WTC11 (cell line): ENCODE measurements at regions of chr5 and their contacts with region 1.

Region 1: GRCh38 chr5:69093771-69094482 is at the start of gene SLC30A5:
- DNase-seq: peak; percentile 99
- ATAC-seq: peak; percentile 99
- H3K4me3 Mint-ChIP-seq: peak within 1 kb of the TSS; percentile 94
- H3K27ac Mint-ChIP-seq: peak within 1 kb of the TSS; percentile 94
- H3K4me1 Mint-ChIP-seq: peaks cover 12% of the 10 kb centered on the region
- H3K27me3 Mint-ChIP-seq: no peaks in the 10 kb centered on the region; the same call in 1 of the 2 replicates
- CTCF ChIP-seq: peak; percentile 61
- total RNA-seq, gene SLC30A5: 32.2 to 37.4 TPM (median 34.1 TPM) in 3 replicates

Region 2: GRCh38 chr5:69013481-69013880 is 80.4 kb before region 1 on chr5:
- CTCF ChIA-PET with region 1: no interaction called
- POLR2A ChIA-PET with region 1: no interaction called
- DNase-seq: no peak
- ATAC-seq: no peak
- H3K4me3 Mint-ChIP-seq: no peak overlapping the region
- H3K27ac Mint-ChIP-seq: no peak overlapping the region
- H3K4me1 Mint-ChIP-seq: no peaks in the 10 kb centered on the region
- H3K27me3 Mint-ChIP-seq: no peaks in the 10 kb centered on the region; the same call in 1 of the 2 replicates
- CTCF ChIP-seq: no peak

Region 3: DNA sequence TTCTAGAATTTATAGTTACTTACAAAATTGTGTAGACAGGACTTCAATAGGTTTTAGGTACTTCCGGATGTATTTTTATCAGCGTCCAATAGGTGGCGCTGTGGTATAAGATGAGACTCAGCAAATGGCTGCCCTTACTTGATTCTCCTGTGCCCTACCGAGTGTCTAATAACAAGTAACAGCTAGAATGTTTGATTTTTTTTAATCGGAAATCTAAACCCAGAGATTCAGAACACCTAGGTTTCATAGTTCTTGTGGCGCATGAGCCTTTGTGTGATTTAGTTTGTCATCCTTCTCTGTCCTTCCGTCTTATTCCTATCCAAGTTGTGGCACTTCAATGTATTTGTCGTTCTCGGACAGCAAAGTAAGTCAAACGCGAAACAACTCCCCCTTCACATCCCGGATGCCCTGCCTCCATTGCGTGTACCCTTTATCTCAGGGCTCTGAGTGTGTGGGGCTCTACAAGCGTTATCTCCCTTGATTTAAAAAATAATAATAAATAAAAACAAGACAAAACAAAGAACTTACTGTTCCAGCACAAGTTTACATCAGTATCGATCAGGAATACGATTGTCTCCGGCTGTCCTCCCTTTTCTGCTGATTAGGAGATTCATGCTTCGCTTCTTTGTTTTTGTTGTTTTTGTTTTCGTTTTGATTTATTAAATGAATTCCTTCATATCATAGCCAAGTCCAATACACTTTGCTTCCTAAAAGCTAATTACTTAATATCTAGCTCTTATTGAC is 50.8 kb before region 1 on chr5:
- CTCF ChIA-PET with region 1: interaction called, 12 read pairs
- POLR2A ChIA-PET with region 1: no interaction called
- DNase-seq: peak; percentile 66
- ATAC-seq: peak; percentile 85
- H3K4me3 Mint-ChIP-seq: peak overlapping the region; percentile 68
- H3K27ac Mint-ChIP-seq: no peak overlapping the region; the same call in 1 of the 2 replicates
- H3K4me1 Mint-ChIP-seq: peaks cover 4% of the 10 kb centered on the region; the same call in 1 of the 2 replicates
- H3K27me3 Mint-ChIP-seq: no peaks in the 10 kb centered on the region; the same call in 1 of the 2 replicates
- CTCF ChIP-seq: peak; percentile 90

Region 4: DNA sequence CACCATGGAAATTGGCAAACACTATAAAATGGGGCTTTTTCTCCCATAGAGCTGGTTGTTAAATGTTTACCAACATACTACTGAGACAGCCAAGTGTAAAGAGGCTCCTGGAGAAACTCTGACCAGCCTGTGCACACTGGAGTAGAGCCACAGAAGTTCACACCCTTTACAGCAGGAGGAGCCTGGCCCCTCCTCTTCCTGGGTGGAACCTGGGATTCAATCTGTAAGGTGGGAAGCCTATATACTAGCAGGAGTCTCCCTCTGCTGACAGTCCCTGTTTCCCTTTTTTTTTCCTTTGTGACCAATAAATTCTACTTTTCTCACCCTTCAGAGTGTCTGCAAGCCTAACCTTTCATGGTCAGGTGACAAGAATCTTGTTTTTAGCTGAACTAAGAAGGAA is 10.5 kb before region 1 on chr5:
- CTCF ChIA-PET with region 1: interaction called, 32 read pairs
- POLR2A ChIA-PET with region 1: no interaction called
- DNase-seq: peak; percentile 35
- ATAC-seq: peak; percentile 100
- H3K4me3 Mint-ChIP-seq: no peak overlapping the region
- H3K27ac Mint-ChIP-seq: no peak overlapping the region
- H3K4me1 Mint-ChIP-seq: peaks cover 4% of the 10 kb centered on the region
- H3K27me3 Mint-ChIP-seq: no peaks in the 10 kb centered on the region
- CTCF ChIP-seq: no peak

Region 5: DNA sequence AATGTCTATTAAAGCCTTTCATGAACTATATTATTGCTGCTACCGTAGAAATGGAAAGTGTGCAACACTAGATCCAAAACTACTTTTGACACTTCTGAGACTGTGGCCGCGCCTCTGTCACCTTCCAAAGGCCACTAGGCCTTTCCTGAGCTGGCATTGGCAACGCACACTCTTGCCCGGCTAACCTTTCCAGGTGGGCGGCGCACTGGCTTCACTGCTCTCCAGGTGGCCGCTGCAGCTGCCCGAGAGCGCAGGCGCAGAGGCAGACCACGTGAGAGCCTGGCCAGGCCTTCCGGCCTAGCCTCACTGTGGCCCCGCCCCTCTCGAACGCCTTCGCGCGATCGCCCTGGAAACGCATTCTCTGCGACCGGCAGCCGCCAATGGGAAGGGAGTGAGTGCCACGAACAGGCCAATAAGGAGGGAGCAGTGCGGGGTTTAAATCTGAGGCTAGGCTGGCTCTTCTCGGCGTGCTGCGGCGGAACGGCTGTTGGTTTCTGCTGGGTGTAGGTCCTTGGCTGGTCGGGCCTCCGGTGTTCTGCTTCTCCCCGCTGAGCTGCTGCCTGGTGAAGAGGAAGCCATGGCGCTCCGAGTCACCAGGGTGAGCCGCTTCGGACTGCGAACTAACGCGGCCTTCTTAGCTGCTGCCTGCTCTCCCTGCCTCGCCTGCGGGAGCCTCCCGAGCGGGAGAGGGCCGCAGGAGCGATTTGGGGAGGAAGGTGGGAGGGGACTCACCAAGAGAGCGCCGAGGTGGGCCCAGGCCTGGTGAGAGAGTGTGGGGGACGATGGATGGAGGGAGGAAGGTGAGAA is 73.0 kb after region 1 on chr5 and contains the start of gene CCNB1:
- CTCF ChIA-PET with region 1: interaction called, 22 read pairs
- POLR2A ChIA-PET with region 1: interaction called, 3 read pairs
- DNase-seq: peak; percentile 99
- ATAC-seq: peak; percentile 98
- H3K4me3 Mint-ChIP-seq: peak within 1 kb of the TSS; percentile 94
- H3K27ac Mint-ChIP-seq: peak within 1 kb of the TSS; percentile 94
- H3K4me1 Mint-ChIP-seq: peaks cover 30% of the 10 kb centered on the region
- H3K27me3 Mint-ChIP-seq: no peaks in the 10 kb centered on the region
- CTCF ChIP-seq: no peak
- total RNA-seq, gene CCNB1: 277 to 312 TPM (median 282 TPM) in 3 replicates

Region 6: GRCh38 chr5:69189162-69190086 is 95.5 kb after region 1 on chr5 and contains the start of gene CENPH:
- CTCF ChIA-PET with region 1: interaction called, 23 read pairs
- POLR2A ChIA-PET with region 1: interaction called, 7 read pairs
- DNase-seq: peak; percentile 95
- ATAC-seq: peak; percentile 92
- H3K4me3 Mint-ChIP-seq: peak within 1 kb of the TSS; percentile 97
- H3K27ac Mint-ChIP-seq: peak within 1 kb of the TSS; percentile 97
- H3K4me1 Mint-ChIP-seq: peaks cover 13% of the 10 kb centered on the region
- H3K27me3 Mint-ChIP-seq: no peaks in the 10 kb centered on the region
- CTCF ChIP-seq: no peak
- total RNA-seq, gene CENPH: 79.0 to 87.4 TPM (median 86.4 TPM) in 3 replicates

Region 7: GRCh38 chr5:69209607-69210006 is 115.7 kb after region 1 on chr5:
- CTCF ChIA-PET with region 1: interaction called, 10 read pairs
- POLR2A ChIA-PET with region 1: no interaction called
- DNase-seq: no peak
- ATAC-seq: no peak
- H3K4me3 Mint-ChIP-seq: no peak overlapping the region
- H3K27ac Mint-ChIP-seq: no peak overlapping the region
- H3K4me1 Mint-ChIP-seq: no peaks in the 10 kb centered on the region
- H3K27me3 Mint-ChIP-seq: no peaks in the 10 kb centered on the region
- CTCF ChIP-seq: no peak

Region 8: GRCh38 chr5:69334793-69335268 is 240.9 kb after region 1 on chr5:
- CTCF ChIA-PET with region 1: interaction called, 17 read pairs
- POLR2A ChIA-PET with region 1: no interaction called
- DNase-seq: peak; percentile 85
- ATAC-seq: peak; percentile 91
- H3K4me3 Mint-ChIP-seq: no peak overlapping the region; the same call in 1 of the 2 replicates
- H3K27ac Mint-ChIP-seq: no peak overlapping the region
- H3K4me1 Mint-ChIP-seq: peaks cover 13% of the 10 kb centered on the region
- H3K27me3 Mint-ChIP-seq: peaks cover 14% of the 10 kb centered on the region
- CTCF ChIP-seq: peak; percentile 53